ENCODE measurements at regions of chr19 and their contacts with region 1.

Region 1: GRCh38 chr19:5369962-5370367 is 29.4 kb upstream of the PTPRS start:
- DNase-seq: peak in 22 of 35 experiments; percentile 2 to 39 (median 13)
- ATAC-seq: no peak
- H3K4me3 ChIP-seq: no peak overlapping the region
- H3K4me3 Mint-ChIP-seq: no peak overlapping the region
- H3K27ac ChIP-seq: no peak overlapping the region
- H3K27ac Mint-ChIP-seq: no peak overlapping the region
- H3K4me1 ChIP-seq: no peaks in the 10 kb centered on the region
- H3K4me1 Mint-ChIP-seq: no peaks in the 10 kb centered on the region
- H3K27me3 ChIP-seq: peaks cover 0 to 36% of the 10 kb centered on the region in 2 experiments
- H3K27me3 Mint-ChIP-seq: peaks cover 10 to 20% of the 10 kb centered on the region in 2 donors

Region 2: GRCh38 chr19:3751236-3751635 is 1618.7 kb before region 1 on chr19:
- CTCF ChIA-PET with region 1: interaction called in 1 of 2 experiments, 11 read pairs
- POLR2A ChIA-PET with region 1: no interaction called
- DNase-seq: no peak
- ATAC-seq: no peak
- H3K4me3 ChIP-seq: no peak overlapping the region
- H3K4me3 Mint-ChIP-seq: no peak overlapping the region
- H3K27ac ChIP-seq: no peak overlapping the region
- H3K27ac Mint-ChIP-seq: no peak overlapping the region
- H3K4me1 ChIP-seq: peaks cover 0 to 5% of the 10 kb centered on the region in 2 experiments
- H3K4me1 Mint-ChIP-seq: peaks cover 13 to 15% (median 13%) of the 10 kb centered on the region in 3 donors
- H3K27me3 ChIP-seq: no peaks in the 10 kb centered on the region
- H3K27me3 Mint-ChIP-seq: no peaks in the 10 kb centered on the region

Measured in T-cell (primary cell).